ENCODE measurements at regions of chr1 and their contacts with region 1.

Region 1: GRCh38 chr1:19728413-19729145 is 63.9 kb downstream of the HTR6 start:
- DNase-seq: no peak
- H3K4me3 ChIP-seq: no peak overlapping the region
- H3K27ac ChIP-seq: no peak overlapping the region
- H3K4me1 ChIP-seq: no peaks in the 10 kb centered on the region
- H3K27me3 ChIP-seq: no peaks in the 10 kb centered on the region
- CTCF ChIP-seq: no peak

Region 2: DNA sequence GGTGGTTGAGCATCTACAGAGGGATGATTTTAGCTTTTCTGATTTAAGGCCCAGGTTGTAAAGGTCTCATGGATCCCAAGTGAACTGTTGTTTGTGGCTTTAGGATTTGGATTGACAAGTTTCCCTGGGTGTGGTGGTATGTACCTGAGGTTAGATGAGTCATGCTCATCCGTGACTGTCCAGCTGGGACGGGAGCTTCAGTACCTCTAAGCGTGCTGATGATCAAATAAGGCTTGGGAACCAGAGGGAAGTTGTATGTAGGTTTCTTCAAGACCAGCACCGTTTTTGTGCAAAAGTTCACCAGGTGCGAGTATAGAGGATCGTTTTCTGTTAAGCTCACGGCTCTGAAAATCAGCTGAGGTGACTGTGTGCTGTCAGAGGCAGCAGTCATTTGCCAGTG is 175.0 kb after region 1 on chr1:
- CTCF ChIA-PET with region 1: interaction called, 11 read pairs
- POLR2A ChIA-PET with region 1: no interaction called
- intact Hi-C with region 1: no loop called
- DNase-seq: peak; percentile 59 to 91
- H3K4me3 ChIP-seq: no peak overlapping the region
- H3K27ac ChIP-seq: peak overlapping the region; percentile 82
- H3K4me1 ChIP-seq: peaks cover 20% of the 10 kb centered on the region
- H3K27me3 ChIP-seq: no peaks in the 10 kb centered on the region
- CTCF ChIP-seq: no peak